Posterior vena cava (tissue), 2 donors: ENCODE measurements at regions of chr13 and their contacts with region 1.

Region 1: GRCh38 chr13:47890146-47890814 is 110.8 kb downstream of the SUCLA2 start:
- DNase-seq: no peak

Region 2: DNA sequence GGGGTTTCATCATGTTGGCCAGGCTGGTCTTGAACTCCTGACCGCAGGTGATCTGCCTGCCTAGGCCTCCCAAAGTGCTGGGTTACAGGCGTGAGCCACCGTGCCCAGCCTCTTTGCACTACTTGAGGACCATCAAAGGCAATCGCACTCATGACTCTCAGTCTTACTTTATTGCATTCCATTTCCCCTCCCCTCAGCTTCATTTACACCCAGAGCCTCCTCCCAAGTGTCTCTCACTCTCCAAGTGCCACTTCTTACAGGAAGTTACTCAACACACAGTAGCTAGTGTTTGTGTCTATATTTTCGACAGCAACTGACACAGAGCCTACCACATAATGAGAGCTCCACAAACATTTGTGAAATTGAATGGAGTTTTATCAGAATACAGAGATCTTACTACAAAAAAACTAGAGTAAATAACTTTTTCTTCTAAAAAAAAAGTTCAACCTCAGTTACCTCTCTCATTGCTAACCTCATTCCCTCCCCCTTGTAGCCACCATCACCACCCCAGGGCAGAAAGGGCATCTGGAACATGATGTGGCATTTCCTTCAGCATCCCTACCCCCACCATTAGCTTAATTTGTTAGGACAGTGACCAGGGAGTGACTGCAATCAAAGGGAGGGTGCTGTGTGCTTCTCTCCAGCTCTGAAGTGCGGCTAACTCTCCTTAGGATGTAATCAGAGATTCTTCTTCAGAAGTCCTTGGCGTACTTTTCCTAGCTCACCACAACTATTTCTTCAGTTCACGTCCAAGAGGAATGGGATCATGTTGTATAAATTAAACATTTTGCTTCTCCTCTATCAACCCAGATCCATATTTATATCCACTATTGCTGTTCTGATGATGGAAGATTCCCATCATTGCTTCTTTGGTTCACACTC is 1486.2 kb before region 1 on chr13:
- intact Hi-C with region 1: no loop called
- DNase-seq: no peak

Region 3: DNA sequence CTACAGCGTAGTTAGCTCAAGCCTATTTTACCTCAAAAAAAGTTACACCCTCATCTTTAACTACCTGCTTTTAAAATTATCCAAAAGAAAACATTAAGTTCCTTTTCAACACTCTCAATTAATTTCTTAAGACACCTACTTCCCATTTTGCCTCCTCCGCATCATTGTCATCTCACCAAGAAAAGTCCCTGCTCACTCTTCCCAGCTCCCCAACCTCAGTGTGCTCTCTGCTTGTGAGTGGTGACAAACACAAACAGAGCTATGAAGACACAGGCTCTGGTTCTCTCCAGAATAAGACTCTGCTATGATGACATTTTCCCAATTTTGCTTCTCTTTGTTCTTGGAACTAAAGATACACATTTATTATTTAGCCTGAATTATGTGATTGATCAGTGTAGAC is 608.3 kb before region 1 on chr13:
- intact Hi-C with region 1: loop called in 1 of 2 experiments (anchors 5 kb)
- DNase-seq: no peak

Region 4: DNA sequence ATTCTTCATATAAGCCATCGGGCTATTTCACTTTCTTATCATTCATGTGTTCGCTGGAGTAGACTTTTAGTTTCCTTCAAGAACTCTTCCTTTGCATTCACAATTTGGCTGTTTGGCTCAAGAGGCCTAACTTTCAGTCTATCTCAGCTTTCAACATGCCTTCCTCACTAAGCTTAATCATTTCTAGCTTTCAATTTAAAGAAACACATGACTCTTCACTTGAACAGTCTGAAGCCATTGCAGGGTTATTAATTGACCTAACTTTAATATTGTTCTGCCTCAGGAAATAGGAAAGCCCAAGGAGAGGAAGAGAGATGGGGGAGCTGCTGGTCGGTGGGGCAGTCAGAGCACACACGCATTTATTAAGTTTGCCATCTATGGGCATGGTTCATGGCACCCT is 47.3 kb before region 1 on chr13:
- intact Hi-C with region 1: loop called in 1 of 2 experiments (anchors 1 kb)
- DNase-seq: no peak